A549 (cell line): ENCODE measurements at regions of chr19 and their contacts with region 1.

Region 1: DNA sequence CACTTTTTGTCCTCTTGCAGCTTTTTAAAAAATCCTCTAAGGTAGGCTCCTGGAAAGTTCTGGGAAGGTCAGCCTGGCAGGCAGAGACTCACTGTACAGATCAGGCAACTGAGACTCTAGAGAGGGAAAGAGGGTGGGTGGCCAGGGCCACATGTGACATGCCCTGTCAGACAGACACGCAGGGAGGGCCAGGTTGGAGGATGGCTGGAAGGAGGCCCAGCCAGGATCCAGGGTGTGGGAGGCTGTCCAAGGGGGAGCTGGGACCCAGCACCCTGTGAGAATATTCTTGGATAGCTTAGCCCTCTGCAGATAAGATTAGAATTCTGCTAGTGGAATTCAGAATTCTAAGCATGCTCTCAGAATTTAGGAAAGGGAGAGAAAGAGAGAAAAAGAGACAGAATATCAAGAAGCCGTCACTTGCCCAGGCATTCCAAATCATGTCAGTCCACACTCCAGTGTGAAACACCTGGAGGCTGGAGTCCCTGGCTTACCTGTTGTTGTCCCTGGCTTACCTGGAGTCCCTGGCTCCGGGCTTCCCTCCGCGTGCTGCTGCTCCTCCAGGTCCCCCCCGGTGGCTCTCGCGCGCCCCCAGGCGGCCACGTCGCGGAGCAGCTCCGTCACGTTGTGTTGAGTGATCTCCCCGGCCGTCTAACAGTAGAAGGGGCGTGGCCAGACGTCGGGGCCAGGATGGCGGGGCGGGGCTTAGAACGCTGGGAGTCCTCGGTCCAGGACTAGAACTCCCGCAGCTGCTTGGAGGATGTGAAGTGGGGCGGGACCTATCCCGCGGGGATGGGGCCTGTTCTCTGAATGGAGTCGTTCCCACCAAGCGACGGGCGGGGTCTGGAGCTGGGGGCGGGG is 2.8 kb upstream of the TNNI3 start:
- DNase-seq: peak; percentile 95 to 98
- ATAC-seq: peak; percentile 66 to 85
- H3K4me3 ChIP-seq: 0 out of 3 replicates have a peak overlapping the region, but pooled peaks have one; percentile 10
- H3K27ac ChIP-seq: peak overlapping the region in 1 of 2 experiments; percentile 69; a peak in 3 of 6 replicates
- H3K4me1 ChIP-seq: peaks cover 22% of the 10 kb centered on the region
- CTCF ChIP-seq: peak; percentile 98
- EP300 ChIP-seq: no peak
- POLR2A ChIP-seq: no peak
- RAD21 ChIP-seq: peak; percentile 90

Region 2: DNA sequence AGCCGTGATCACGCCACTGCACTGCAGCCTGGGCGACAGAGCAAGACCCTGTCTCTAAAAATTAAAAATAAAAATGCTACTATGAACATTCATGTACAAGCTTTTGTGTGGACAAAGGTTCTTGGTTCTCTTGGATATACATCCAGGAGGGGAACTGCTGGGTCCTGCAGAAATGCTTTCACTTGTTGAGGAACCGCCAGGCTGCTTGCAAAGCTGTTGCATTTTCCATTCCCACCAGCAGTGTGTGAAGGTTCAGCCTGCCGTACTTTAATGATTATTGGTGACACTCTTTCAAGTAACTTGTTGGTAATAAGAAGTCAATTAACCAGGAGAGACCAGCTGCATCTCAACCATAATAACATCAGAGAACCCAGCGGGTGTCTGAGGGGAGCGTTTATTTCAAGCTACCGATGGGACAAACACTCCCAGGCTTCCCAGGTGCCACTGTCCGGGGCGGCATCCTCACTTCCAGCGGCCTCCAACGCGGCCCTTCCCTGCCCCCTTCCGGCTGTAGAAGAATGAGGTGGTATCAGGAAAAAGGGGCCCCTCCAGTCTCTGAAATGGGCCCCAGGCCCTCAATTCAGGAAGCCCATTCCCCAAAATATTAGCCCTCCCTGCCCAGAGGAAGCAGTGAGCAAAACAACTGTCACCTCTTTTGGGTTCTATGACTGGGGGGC is 27.8 kb before region 1 on chr19:
- CTCF ChIA-PET with region 1: interaction called, 25 read pairs
- POLR2A ChIA-PET with region 1: no interaction called
- DNase-seq: no peak
- ATAC-seq: no peak
- H3K4me3 ChIP-seq: no peak overlapping the region
- H3K27ac ChIP-seq: no peak overlapping the region
- H3K4me1 ChIP-seq: no peaks in the 10 kb centered on the region
- CTCF ChIP-seq: no peak
- EP300 ChIP-seq: no peak
- POLR2A ChIP-seq: no peak
- RAD21 ChIP-seq: no peak

Region 3: GRCh38 chr19:55178781-55179599 is 18.6 kb after region 1 on chr19:
- CTCF ChIA-PET with region 1: interaction called, 64 read pairs
- POLR2A ChIA-PET with region 1: interaction called, 3 read pairs
- DNase-seq: peak; percentile 91
- ATAC-seq: peak; percentile 74 to 80
- H3K4me3 ChIP-seq: peak overlapping the region; percentile 26
- H3K27ac ChIP-seq: no peak overlapping the region; a peak in 1 of 6 replicates
- H3K4me1 ChIP-seq: peaks cover 17% of the 10 kb centered on the region
- CTCF ChIP-seq: no peak
- EP300 ChIP-seq: no peak
- POLR2A ChIP-seq: no peak
- RAD21 ChIP-seq: no peak

Region 4: DNA sequence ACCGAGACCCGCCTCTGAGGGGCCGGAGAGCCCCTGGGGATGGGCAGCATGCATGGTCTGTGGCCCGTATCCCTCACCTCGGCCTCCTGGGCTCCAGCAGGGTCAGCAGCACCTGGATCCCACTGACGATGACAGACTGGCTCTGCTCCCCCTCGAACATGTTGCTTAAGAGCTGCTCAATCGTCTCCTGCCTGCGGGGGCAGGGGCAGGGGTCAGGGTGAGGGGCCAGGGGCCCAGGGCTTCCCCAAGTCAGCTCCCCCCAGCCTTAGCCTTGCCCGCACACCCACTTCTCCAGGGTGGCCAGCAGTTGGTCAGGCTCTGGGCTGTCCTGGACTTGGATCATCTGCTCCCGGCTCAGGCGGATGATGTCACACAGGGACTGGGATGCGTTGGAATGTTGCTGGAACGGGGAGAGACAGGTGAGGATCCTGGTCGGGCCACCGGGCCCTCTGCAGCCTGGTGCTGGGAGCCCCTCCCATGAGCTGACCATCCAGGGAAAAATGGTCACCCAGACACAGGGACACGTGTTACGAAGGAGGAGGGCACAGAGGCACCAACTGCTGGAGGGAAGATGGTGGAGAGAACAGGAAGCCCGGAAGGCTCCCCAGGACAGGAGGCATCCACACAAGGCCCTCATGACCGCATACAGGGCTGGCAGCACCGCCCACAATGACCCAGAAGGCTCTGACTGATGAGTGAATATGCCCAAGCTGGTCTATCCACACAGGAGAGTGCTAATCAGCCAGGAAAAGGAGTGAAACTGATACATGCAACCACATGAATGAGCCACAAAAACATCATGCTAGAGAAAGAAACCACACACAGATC is 81.9 kb after region 1 on chr19:
- CTCF ChIA-PET with region 1: interaction called, 14 read pairs
- POLR2A ChIA-PET with region 1: no interaction called
- DNase-seq: no peak
- ATAC-seq: no peak
- H3K4me3 ChIP-seq: no peak overlapping the region
- H3K27ac ChIP-seq: no peak overlapping the region
- H3K4me1 ChIP-seq: peaks cover 2% of the 10 kb centered on the region; the same call in 2 of the 3 replicates
- CTCF ChIP-seq: no peak
- EP300 ChIP-seq: no peak
- POLR2A ChIP-seq: no peak
- RAD21 ChIP-seq: no peak